ENCODE measurements at regions of chr2 and their contacts with region 1.

Region 1: GRCh38 chr2:195656859-195657633 is at the start of gene SLC39A10:
- DNase-seq: peak; percentile 94
- H3K4me3 Mint-ChIP-seq: peak within 1 kb of the TSS; percentile 97
- H3K27ac Mint-ChIP-seq: peak within 1 kb of the TSS; percentile 99
- H3K4me1 Mint-ChIP-seq: peaks cover 28% of the 10 kb centered on the region
- H3K27me3 Mint-ChIP-seq: no peaks in the 10 kb centered on the region
- CTCF ChIP-seq: no peak
- total RNA-seq, gene SLC39A10: 49.0 and 133 TPM in 2 replicates

Region 2: DNA sequence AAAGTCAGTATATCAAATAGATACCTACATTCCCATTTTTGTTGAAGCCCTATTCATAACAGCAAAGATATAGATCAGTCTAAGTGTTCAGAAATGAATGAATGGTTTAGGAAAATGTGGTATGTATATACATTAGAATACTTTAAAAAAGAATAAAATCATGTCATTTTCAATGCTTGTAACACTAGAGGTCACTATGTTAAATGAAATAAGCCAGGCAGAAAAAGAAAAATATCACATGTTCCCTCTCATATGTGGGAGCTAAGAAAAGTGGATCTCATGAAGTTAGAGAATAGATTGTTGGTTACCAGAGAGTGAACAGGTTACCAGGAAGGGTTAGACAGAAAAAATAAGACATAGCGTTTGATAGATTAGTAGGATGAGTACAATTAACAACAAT is 1111.1 kb before region 1 on chr2:
- CTCF ChIA-PET with region 1: no interaction called
- intact Hi-C with region 1: loop called (anchors 10 kb)
- DNase-seq: no peak
- H3K4me3 Mint-ChIP-seq: no peak overlapping the region
- H3K27ac Mint-ChIP-seq: no peak overlapping the region
- H3K4me1 Mint-ChIP-seq: peaks cover 21% of the 10 kb centered on the region
- H3K27me3 Mint-ChIP-seq: no peaks in the 10 kb centered on the region
- CTCF ChIP-seq: peak; percentile 32

Region 3: GRCh38 chr2:195410074-195410671 is 246.9 kb before region 1 on chr2:
- CTCF ChIA-PET with region 1: no interaction called
- intact Hi-C with region 1: no loop called
- DNase-seq: no peak
- H3K4me3 Mint-ChIP-seq: no peak overlapping the region
- H3K27ac Mint-ChIP-seq: no peak overlapping the region
- H3K4me1 Mint-ChIP-seq: no peaks in the 10 kb centered on the region
- H3K27me3 Mint-ChIP-seq: no peaks in the 10 kb centered on the region
- CTCF ChIP-seq: no peak

Region 4: GRCh38 chr2:195498176-195498575 is 158.9 kb before region 1 on chr2:
- CTCF ChIA-PET with region 1: interaction called, 13 read pairs
- intact Hi-C with region 1: loop called (anchors 1 kb)
- DNase-seq: peak; percentile 57
- H3K4me3 Mint-ChIP-seq: no peak overlapping the region
- H3K27ac Mint-ChIP-seq: no peak overlapping the region
- H3K4me1 Mint-ChIP-seq: peaks cover 8% of the 10 kb centered on the region
- H3K27me3 Mint-ChIP-seq: no peaks in the 10 kb centered on the region
- CTCF ChIP-seq: peak; percentile 34

Region 5: DNA sequence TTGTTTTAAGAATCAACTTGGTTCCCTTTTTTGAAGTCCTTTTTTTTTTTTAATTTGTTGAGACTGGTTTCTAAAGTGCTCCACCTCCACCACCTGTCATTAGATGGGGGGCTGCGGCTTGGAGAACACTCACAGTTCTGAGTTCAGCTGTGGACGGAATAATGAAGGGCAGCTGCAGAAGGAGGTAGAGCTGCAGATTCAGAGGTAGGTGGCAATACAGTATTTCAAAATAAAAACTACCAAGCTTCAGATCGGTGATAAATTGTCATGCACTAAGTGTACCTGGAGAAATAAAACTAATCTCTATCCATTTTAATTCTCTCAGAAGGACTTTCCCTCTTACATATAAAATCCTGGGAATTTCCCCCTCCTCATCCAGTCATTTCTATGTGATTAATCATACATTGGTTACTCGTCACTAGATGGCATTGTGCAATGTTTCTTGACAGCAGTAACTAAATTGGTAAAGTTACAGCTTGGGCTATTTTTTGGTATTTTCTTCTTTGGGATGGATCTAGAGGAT is 81.1 kb before region 1 on chr2:
- CTCF ChIA-PET with region 1: interaction called, 22 read pairs
- intact Hi-C with region 1: loop called (anchors 1 kb)
- DNase-seq: peak; percentile 20
- H3K4me3 Mint-ChIP-seq: peak overlapping the region; percentile 32
- H3K27ac Mint-ChIP-seq: peak overlapping the region; percentile 70
- H3K4me1 Mint-ChIP-seq: peaks cover 30% of the 10 kb centered on the region
- H3K27me3 Mint-ChIP-seq: no peaks in the 10 kb centered on the region
- CTCF ChIP-seq: no peak

Region 6: GRCh38 chr2:195594248-195594647 is 62.8 kb before region 1 on chr2:
- CTCF ChIA-PET with region 1: interaction called, 7 read pairs
- intact Hi-C with region 1: loop called (anchors 5 kb)
- DNase-seq: no peak
- H3K4me3 Mint-ChIP-seq: no peak overlapping the region
- H3K27ac Mint-ChIP-seq: no peak overlapping the region
- H3K4me1 Mint-ChIP-seq: peaks cover 40% of the 10 kb centered on the region
- H3K27me3 Mint-ChIP-seq: no peaks in the 10 kb centered on the region
- CTCF ChIP-seq: no peak

Region 7: GRCh38 chr2:195612611-195613495 is 44.2 kb before region 1 on chr2:
- CTCF ChIA-PET with region 1: interaction called, 20 read pairs
- intact Hi-C with region 1: loop called (anchors 1 kb)
- DNase-seq: peak; percentile 73
- H3K4me3 Mint-ChIP-seq: peak overlapping the region; percentile 58
- H3K27ac Mint-ChIP-seq: peak overlapping the region; percentile 84
- H3K4me1 Mint-ChIP-seq: peaks cover 47% of the 10 kb centered on the region
- H3K27me3 Mint-ChIP-seq: no peaks in the 10 kb centered on the region
- CTCF ChIP-seq: no peak

Region 8: GRCh38 chr2:195622956-195623355 is 34.1 kb before region 1 on chr2:
- CTCF ChIA-PET with region 1: interaction called, 13 read pairs
- intact Hi-C with region 1: no loop called
- DNase-seq: no peak
- H3K4me3 Mint-ChIP-seq: no peak overlapping the region
- H3K27ac Mint-ChIP-seq: peak overlapping the region; percentile 42
- H3K4me1 Mint-ChIP-seq: peaks cover 45% of the 10 kb centered on the region
- H3K27me3 Mint-ChIP-seq: no peaks in the 10 kb centered on the region
- CTCF ChIP-seq: no peak

Region 9: GRCh38 chr2:196131384-196131937 is 474.4 kb after region 1 on chr2:
- CTCF ChIA-PET with region 1: no interaction called
- intact Hi-C with region 1: no loop called
- DNase-seq: peak; percentile 19
- H3K4me3 Mint-ChIP-seq: no peak overlapping the region
- H3K27ac Mint-ChIP-seq: peak overlapping the region; percentile 22
- H3K4me1 Mint-ChIP-seq: no peaks in the 10 kb centered on the region
- H3K27me3 Mint-ChIP-seq: no peaks in the 10 kb centered on the region
- CTCF ChIP-seq: peak; percentile 34

Measured in Calu3 (cell line).